SK-N-SH (cell line): ENCODE measurements at regions of chr3 and their contacts with region 1.

Region 1: DNA sequence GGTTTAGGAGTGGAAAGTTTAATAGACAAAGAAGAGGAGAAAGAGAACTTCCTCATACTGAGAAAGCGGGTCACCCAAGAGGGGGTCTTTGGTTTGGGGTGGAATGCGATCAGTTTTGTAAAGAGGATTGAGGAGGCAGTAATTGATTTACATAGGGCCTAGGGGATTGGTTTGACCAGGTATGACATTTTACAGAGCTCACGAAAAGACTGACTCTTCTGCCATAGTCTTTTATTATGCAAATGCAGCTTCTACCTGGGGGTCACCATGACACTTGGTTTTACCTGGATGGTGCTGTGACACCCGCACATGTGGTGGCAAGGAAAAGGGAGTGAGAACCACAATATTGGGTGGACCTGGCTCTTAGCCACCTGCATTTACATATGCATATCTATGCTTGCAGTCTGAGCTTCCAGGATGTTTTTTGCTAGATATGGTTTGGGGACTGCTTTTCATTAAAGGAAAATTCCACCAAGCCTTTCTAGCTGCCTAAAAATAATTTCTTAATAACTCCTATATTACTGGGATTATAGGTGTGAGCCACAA is 6.9 kb upstream of the NME9 start:
- DNase-seq: no peak
- H3K4me3 ChIP-seq: no peak overlapping the region
- H3K27ac ChIP-seq: no peak overlapping the region
- H3K4me1 ChIP-seq: no peaks in the 10 kb centered on the region
- H3K27me3 ChIP-seq: no peaks in the 10 kb centered on the region
- CTCF ChIP-seq: no peak
- EP300 ChIP-seq: no peak
- RAD21 ChIP-seq: no peak

Region 2: DNA sequence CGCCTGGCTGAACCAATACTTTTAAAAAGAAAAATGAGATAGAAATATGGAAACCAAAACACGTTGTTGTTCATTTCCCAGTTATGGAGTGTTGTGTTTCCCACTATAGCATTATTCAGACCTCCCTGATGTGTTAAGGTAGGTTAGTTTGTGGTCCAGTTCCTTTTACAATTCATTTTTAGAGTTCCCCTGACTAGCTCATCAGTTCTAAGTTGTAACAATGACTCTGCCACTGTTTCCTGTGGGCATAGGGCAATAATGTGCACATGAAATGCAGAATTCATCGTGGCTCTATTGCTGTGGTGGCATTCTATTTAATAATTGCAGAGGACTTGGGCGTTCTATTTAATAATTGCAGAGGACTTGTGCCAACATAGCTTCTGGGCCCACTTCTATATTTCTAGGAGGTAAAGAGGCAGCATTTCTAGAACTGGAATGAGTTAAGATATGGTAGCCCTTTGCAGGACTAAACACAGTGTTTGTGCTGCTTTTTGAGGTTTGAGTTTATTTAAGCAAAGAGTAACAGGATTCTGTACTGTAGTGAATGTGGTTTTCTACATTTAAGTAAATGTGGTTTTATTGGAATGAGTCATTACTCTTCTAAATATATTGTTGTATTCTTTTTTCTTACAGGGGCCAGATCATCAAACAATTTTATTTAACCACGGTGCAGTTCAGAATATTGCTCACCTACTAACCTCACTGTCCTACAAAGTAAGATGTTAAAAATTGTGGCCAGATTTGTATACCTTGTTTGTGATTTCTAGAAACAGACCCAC is 101.9 kb before region 1 on chr3:
- CTCF ChIA-PET with region 1: no interaction called
- POLR2A ChIA-PET with region 1: no interaction called
- DNase-seq: no peak
- H3K4me3 ChIP-seq: no peak overlapping the region
- H3K27ac ChIP-seq: peak overlapping the region in 1 of 2 experiments; percentile 48; a peak in 2 of 4 replicates
- H3K4me1 ChIP-seq: peaks cover 0 to 5% of the 10 kb centered on the region in 2 experiments; a peak in 1 of 4 replicates
- H3K27me3 ChIP-seq: no peaks in the 10 kb centered on the region
- CTCF ChIP-seq: no peak
- EP300 ChIP-seq: no peak
- RAD21 ChIP-seq: no peak

Region 3: GRCh38 chr3:138347960-138348753 is 11.6 kb after region 1 on chr3 and contains the start of gene MRAS:
- CTCF ChIA-PET with region 1: interaction called, 27 read pairs
- POLR2A ChIA-PET with region 1: no interaction called
- DNase-seq: peak; percentile 91
- H3K4me3 ChIP-seq: peak within 1 kb of the TSS; percentile 68 to 92
- H3K27ac ChIP-seq: peak within 1 kb of the TSS; percentile 66 to 67
- H3K4me1 ChIP-seq: peaks cover 4 to 9% of the 10 kb centered on the region in 2 experiments; a peak in 1 of 4 replicates
- H3K27me3 ChIP-seq: no peaks in the 10 kb centered on the region
- CTCF ChIP-seq: peak; percentile 56
- EP300 ChIP-seq: no peak
- RAD21 ChIP-seq: peak; percentile 55
- polyA plus RNA-seq, gene MRAS: 25.0 and 28.1 TPM in 2 replicates

Region 4: GRCh38 chr3:138371070-138371965 is 34.8 kb after region 1 on chr3:
- CTCF ChIA-PET with region 1: no interaction called
- POLR2A ChIA-PET with region 1: no interaction called
- DNase-seq: no peak
- H3K4me3 ChIP-seq: no peak overlapping the region
- H3K27ac ChIP-seq: no peak overlapping the region
- H3K4me1 ChIP-seq: no peaks in the 10 kb centered on the region
- H3K27me3 ChIP-seq: no peaks in the 10 kb centered on the region
- CTCF ChIP-seq: no peak
- EP300 ChIP-seq: no peak
- RAD21 ChIP-seq: no peak

Region 5: DNA sequence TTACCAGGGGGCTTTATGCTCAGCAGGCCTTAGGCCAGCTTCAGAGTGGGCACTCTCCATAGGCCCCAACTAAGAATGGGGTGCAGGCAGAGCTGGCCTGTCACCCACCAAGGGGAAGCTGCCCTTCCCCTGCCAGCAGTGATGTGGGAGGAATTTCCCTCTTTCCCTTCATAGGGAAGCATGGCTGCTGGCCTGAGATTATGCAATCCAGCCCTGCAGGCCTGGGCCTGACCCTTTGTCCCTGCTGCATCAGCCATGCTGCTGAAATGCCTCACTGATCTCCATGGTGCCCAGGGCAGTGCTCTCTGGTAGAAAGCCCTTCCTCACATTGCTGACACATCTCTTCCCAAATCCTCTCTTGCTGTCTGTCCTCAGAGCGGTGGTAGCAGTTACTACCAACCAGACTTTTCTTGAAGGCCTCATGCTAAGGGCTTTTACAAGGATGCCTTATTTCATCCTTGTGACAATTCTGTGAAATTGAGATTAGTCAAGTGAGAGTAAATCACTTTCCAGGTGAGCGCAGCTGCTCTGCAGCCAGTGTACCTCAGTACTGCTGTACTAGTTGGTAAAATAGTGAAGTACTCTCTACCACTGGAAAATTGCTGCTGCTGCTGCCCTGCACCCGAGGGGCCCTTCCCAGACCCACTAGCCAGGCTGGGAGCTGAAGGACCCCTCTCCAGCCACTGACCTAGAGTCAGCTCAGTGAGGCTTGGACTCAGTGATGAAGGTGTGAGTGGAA is 45.6 kb after region 1 on chr3:
- CTCF ChIA-PET with region 1: no interaction called
- POLR2A ChIA-PET with region 1: no interaction called
- DNase-seq: no peak
- H3K4me3 ChIP-seq: no peak overlapping the region
- H3K27ac ChIP-seq: no peak overlapping the region
- H3K4me1 ChIP-seq: peaks cover 0 to 2% of the 10 kb centered on the region in 2 experiments; a peak in 1 of 4 replicates
- H3K27me3 ChIP-seq: no peaks in the 10 kb centered on the region
- CTCF ChIP-seq: no peak
- EP300 ChIP-seq: no peak
- RAD21 ChIP-seq: no peak

Region 6: DNA sequence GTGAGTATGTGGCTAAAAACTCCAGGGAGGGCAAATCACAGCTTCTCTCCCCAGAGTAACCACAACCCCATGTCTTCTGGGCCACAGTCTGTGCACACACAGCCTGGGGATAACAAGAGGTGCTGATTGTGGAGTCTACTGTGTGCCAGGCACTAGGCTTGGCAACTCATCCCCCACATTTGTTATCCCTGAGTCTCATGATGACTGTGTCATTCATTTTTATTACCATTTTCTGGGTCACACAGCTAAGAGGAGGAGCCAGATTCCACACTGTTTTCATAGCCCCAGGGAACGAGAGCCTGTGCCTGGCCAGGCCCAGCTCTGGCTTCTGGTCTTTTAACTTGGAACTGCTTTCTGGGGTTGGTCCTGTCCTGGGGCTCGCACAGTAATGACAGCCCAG is 132.4 kb after region 1 on chr3:
- CTCF ChIA-PET with region 1: no interaction called
- POLR2A ChIA-PET with region 1: no interaction called
- DNase-seq: no peak
- H3K4me3 ChIP-seq: no peak overlapping the region
- H3K27ac ChIP-seq: no peak overlapping the region
- H3K4me1 ChIP-seq: peaks cover 0 to 5% of the 10 kb centered on the region in 2 experiments; a peak in 1 of 4 replicates
- H3K27me3 ChIP-seq: no peaks in the 10 kb centered on the region
- CTCF ChIP-seq: no peak
- EP300 ChIP-seq: no peak
- RAD21 ChIP-seq: no peak